B cell (primary cell): ENCODE measurements at regions of chr1 and their contacts with region 1.

Region 1: DNA sequence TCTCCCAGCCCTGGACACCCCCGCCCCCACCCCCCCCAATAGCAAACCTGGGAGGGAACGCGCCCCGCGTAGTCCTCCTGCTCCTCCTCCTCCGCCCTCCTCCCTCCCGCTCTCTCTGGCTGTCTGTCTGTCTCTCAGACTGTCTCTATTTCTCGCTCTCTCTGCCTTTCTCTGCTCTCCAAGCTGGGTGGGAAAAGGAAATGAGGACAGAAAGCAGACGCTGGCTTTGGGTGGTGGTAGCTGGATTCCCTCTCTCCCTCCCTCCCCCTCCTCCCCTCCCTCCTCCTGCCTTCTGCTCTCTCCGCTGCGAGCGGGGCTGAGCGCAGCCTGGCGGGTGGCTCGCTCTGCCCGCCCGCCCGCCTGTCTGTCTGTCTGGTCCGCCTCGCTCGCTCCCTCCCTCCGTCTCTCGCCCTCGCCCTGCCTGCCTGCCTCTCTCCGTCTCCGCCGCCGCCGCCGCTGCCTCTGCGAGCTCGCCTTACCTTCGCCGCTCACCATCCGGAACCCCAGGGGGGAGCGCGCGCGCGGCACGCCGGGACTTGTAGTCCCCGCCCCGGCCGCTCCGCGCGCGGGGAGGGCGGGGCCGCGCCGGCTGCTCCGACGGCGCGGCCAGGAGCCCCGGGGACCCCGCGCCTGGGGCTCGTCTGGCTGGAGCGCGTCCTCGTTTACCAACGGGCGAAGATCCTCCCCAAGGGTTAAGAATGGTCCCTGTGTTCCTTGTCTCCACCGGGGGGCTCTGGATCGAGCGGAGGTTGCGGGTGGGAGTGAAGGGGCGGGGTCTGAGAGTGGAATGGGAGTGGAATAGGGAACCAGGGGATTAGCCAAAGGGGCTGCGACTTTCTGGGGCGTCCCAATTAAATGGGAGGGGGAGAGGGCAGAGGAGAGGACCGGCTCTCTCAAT is at the start of gene AHDC1:
- DNase-seq: peak; percentile 93
- ATAC-seq: peak; percentile 78
- H3K4me3 ChIP-seq: peak within 1 kb of the TSS; percentile 63 to 90 (median 79)
- H3K4me3 Mint-ChIP-seq: peak within 1 kb of the TSS; percentile 94
- H3K27ac ChIP-seq: peak within 1 kb of the TSS; percentile 32 to 74
- H3K27ac Mint-ChIP-seq: peak within 1 kb of the TSS; percentile 90
- H3K4me1 ChIP-seq: peaks cover 43 to 66% of the 10 kb centered on the region in 2 donors
- H3K4me1 Mint-ChIP-seq: peaks cover 50% of the 10 kb centered on the region
- H3K27me3 ChIP-seq: no peaks in the 10 kb centered on the region
- H3K27me3 Mint-ChIP-seq: no peaks in the 10 kb centered on the region
- CTCF ChIP-seq: no peak
- total RNA-seq, gene AHDC1: 29.9 and 32.0 TPM in 2 replicates

Region 2: DNA sequence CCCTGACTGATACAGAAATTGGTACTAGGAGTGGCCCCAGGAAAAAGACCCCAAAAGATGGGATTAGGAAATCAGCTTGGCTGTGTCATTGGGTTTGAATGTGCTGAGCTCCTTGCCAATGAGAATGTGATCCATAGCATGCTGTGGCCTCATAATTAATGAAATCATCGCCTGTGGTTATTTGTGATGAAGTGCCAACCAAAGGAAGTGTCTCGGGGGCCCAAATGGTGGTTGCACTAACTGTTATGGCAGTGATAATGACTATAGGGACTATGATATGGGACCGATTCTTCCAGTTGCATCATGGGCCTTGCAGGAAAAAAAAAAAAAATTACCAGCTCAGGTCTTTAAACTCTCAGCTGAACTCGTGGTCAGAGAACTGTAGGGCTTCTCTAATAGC is 792.9 kb before region 1 on chr1:
- CTCF ChIA-PET with region 1: no interaction called
- POLR2A ChIA-PET with region 1: no interaction called
- intact Hi-C with region 1: no loop called
- DNase-seq: no peak
- ATAC-seq: no peak
- H3K4me3 ChIP-seq: no peak overlapping the region
- H3K4me3 Mint-ChIP-seq: no peak overlapping the region
- H3K27ac ChIP-seq: no peak overlapping the region
- H3K27ac Mint-ChIP-seq: no peak overlapping the region
- H3K4me1 ChIP-seq: no peaks in the 10 kb centered on the region
- H3K4me1 Mint-ChIP-seq: peaks cover 3% of the 10 kb centered on the region
- H3K27me3 ChIP-seq: peaks cover 0 to 6% (median 0%) of the 10 kb centered on the region in 4 experiments
- H3K27me3 Mint-ChIP-seq: no peaks in the 10 kb centered on the region
- CTCF ChIP-seq: no peak

Region 3: GRCh38 chr1:27300341-27301051 is 303.4 kb before region 1 on chr1:
- CTCF ChIA-PET with region 1: interaction called, 140 read pairs
- POLR2A ChIA-PET with region 1: interaction called, 7 read pairs
- intact Hi-C with region 1: loop called (anchors 1 kb)
- DNase-seq: peak; percentile 87
- ATAC-seq: peak; percentile 93
- H3K4me3 ChIP-seq: no peak overlapping the region
- H3K4me3 Mint-ChIP-seq: no peak overlapping the region
- H3K27ac ChIP-seq: no peak overlapping the region
- H3K27ac Mint-ChIP-seq: no peak overlapping the region
- H3K4me1 ChIP-seq: peaks cover 0 to 8% of the 10 kb centered on the region in 2 donors
- H3K4me1 Mint-ChIP-seq: peaks cover 3% of the 10 kb centered on the region
- H3K27me3 ChIP-seq: no peaks in the 10 kb centered on the region
- H3K27me3 Mint-ChIP-seq: no peaks in the 10 kb centered on the region
- CTCF ChIP-seq: peak; percentile 95

Region 4: GRCh38 chr1:27357281-27358037 is 246.5 kb before region 1 on chr1:
- CTCF ChIA-PET with region 1: interaction called, 22 read pairs
- POLR2A ChIA-PET with region 1: no interaction called
- intact Hi-C with region 1: no loop called
- DNase-seq: peak; percentile 90
- ATAC-seq: peak; percentile 71
- H3K4me3 ChIP-seq: peak overlapping the region; percentile 21 to 63 (median 54)
- H3K4me3 Mint-ChIP-seq: peak overlapping the region; percentile 84
- H3K27ac ChIP-seq: peak overlapping the region; percentile 19 to 34
- H3K27ac Mint-ChIP-seq: peak overlapping the region; percentile 75
- H3K4me1 ChIP-seq: peaks cover 36 to 54% of the 10 kb centered on the region in 2 donors
- H3K4me1 Mint-ChIP-seq: peaks cover 48% of the 10 kb centered on the region
- H3K27me3 ChIP-seq: no peaks in the 10 kb centered on the region
- H3K27me3 Mint-ChIP-seq: no peaks in the 10 kb centered on the region
- CTCF ChIP-seq: peak; percentile 98

Region 5: DNA sequence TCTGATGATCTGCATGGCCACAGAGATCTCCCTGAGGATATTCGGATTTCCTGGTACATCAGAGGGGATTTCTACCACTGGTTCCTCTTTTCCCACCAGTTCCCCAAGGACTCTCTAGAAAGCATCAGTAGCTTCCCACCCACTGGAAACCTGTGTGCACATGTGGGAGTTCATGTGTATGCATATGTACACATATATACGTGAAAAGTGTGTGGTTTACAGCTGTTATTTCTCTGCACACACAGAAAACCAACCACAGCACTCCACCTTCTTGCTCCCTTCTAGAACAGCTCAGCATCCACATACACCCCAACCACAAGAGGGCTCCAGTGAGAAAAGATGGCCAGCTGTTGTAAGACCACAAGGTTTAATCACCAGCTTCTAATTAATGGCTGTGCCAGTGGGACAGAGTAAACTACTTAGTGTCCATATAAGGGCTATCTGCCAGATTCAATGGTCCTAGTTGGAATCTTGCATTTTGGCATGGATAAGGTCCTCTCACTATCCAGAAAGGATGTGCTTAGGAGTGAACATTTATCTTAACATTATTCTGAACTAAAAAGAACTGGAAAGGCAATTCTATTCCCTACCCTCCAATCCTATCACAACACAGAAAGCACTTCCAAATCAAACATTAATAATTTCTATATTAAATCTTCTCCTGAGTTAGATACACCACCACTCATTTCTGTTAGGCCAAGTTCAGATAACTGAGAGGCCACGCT is 187.4 kb before region 1 on chr1:
- CTCF ChIA-PET with region 1: interaction called, 95 read pairs
- POLR2A ChIA-PET with region 1: interaction called, 5 read pairs
- intact Hi-C with region 1: loop called (anchors 1 kb)
- DNase-seq: peak; percentile 79
- ATAC-seq: peak; percentile 66
- H3K4me3 ChIP-seq: no peak overlapping the region
- H3K4me3 Mint-ChIP-seq: no peak overlapping the region
- H3K27ac ChIP-seq: peak overlapping the region; percentile 37 to 69
- H3K27ac Mint-ChIP-seq: peak overlapping the region; percentile 69
- H3K4me1 ChIP-seq: peaks cover 38 to 39% of the 10 kb centered on the region in 2 donors
- H3K4me1 Mint-ChIP-seq: peaks cover 41% of the 10 kb centered on the region
- H3K27me3 ChIP-seq: no peaks in the 10 kb centered on the region
- H3K27me3 Mint-ChIP-seq: no peaks in the 10 kb centered on the region
- CTCF ChIP-seq: peak; percentile 78

Region 6: DNA sequence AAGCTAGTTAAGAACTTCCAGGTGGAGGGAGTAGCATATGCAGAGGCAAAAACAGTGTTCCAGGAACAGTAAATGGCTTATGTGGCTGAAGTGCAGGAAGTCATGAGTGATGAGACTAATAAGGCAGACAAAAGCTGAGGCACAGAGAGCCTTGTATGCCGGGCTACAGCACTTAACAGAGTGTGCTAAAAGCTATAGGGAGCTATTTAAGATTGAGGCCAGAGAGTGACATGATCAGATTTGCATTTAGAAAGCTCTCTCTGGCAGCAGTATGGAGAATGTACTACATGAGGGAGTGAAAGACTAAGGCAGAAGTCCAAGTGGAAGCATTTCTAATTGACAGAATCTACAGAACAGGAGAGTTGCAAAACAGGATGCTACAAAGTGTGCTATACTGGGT is 152.6 kb before region 1 on chr1:
- CTCF ChIA-PET with region 1: no interaction called
- POLR2A ChIA-PET with region 1: no interaction called
- intact Hi-C with region 1: no loop called
- DNase-seq: no peak
- ATAC-seq: no peak
- H3K4me3 ChIP-seq: no peak overlapping the region
- H3K4me3 Mint-ChIP-seq: no peak overlapping the region
- H3K27ac ChIP-seq: peak overlapping the region in 1 of 2 donors; percentile 18
- H3K27ac Mint-ChIP-seq: peak overlapping the region; percentile 15
- H3K4me1 ChIP-seq: peaks cover 22 to 26% of the 10 kb centered on the region in 2 donors
- H3K4me1 Mint-ChIP-seq: peaks cover 57% of the 10 kb centered on the region
- H3K27me3 ChIP-seq: no peaks in the 10 kb centered on the region
- H3K27me3 Mint-ChIP-seq: no peaks in the 10 kb centered on the region
- CTCF ChIP-seq: no peak

Region 7: GRCh38 chr1:27568300-27569087 is 35.4 kb before region 1 on chr1:
- CTCF ChIA-PET with region 1: interaction called, 60 read pairs
- POLR2A ChIA-PET with region 1: interaction called, 5 read pairs
- intact Hi-C with region 1: loop called (anchors 1 kb)
- DNase-seq: peak; percentile 95
- ATAC-seq: peak; percentile 92
- H3K4me3 ChIP-seq: peak overlapping the region in 4 of 5 experiments; percentile 25 to 69 (median 50)
- H3K4me3 Mint-ChIP-seq: peak overlapping the region; percentile 86
- H3K27ac ChIP-seq: peak overlapping the region; percentile 27 to 68
- H3K27ac Mint-ChIP-seq: peak overlapping the region; percentile 69
- H3K4me1 ChIP-seq: peaks cover 15 to 38% of the 10 kb centered on the region in 2 donors
- H3K4me1 Mint-ChIP-seq: peaks cover 40% of the 10 kb centered on the region
- H3K27me3 ChIP-seq: no peaks in the 10 kb centered on the region
- H3K27me3 Mint-ChIP-seq: no peaks in the 10 kb centered on the region
- CTCF ChIP-seq: peak; percentile 82

Region 8: GRCh38 chr1:27624467-27625178 is 20.7 kb after region 1 on chr1:
- CTCF ChIA-PET with region 1: interaction called, 22 read pairs
- POLR2A ChIA-PET with region 1: interaction called, 9 read pairs
- intact Hi-C with region 1: loop called (anchors 1 kb)
- DNase-seq: no peak
- ATAC-seq: no peak
- H3K4me3 ChIP-seq: peak overlapping the region; percentile 56 to 66 (median 63)
- H3K4me3 Mint-ChIP-seq: no peak overlapping the region
- H3K27ac ChIP-seq: peak overlapping the region; percentile 87 to 88
- H3K27ac Mint-ChIP-seq: no peak overlapping the region
- H3K4me1 ChIP-seq: peaks cover 74 to 91% of the 10 kb centered on the region in 2 donors
- H3K4me1 Mint-ChIP-seq: peaks cover 41% of the 10 kb centered on the region
- H3K27me3 ChIP-seq: no peaks in the 10 kb centered on the region
- H3K27me3 Mint-ChIP-seq: no peaks in the 10 kb centered on the region
- CTCF ChIP-seq: no peak

Region 9: DNA sequence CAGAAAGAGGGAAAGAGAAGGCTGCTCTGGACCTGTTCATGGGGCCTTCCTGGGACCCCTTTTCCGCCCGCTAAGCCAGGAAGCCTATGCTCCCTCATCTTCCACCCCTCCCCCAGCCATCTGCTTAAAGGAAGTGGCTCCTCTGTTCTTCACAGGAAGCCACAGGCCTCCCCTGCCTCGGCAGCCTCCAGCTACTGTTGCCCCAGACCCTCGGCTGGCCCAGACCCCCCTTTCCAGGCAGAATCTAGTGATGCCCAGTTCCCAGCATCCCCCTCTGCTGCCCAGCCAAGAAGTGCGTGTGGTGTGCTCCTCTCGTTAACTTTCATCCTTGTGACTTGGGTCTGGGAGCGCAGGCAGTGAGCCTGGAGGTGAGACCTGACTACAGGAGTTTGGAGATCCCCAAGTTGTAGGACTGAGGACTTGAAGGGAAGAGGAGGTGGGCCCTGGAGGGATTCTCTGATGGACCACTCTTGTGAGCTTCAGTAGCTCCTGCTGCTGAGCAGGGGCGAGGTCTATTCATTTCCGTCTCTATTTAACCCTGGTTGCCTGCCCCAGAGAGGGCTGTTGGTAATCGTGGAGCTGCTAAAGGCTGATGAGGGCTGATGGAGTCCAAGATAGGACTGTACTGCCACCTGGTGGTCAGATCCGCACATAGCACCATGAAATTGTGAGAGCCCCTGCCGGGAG is 58.9 kb after region 1 on chr1:
- CTCF ChIA-PET with region 1: interaction called, 473 read pairs
- POLR2A ChIA-PET with region 1: interaction called, 31 read pairs
- intact Hi-C with region 1: loop called (anchors 1 kb)
- DNase-seq: peak; percentile 93
- ATAC-seq: peak; percentile 40
- H3K4me3 ChIP-seq: peak overlapping the region in 4 of 5 experiments; percentile 20 to 33 (median 24)
- H3K4me3 Mint-ChIP-seq: peak overlapping the region; percentile 81
- H3K27ac ChIP-seq: peak overlapping the region; percentile 85 to 96
- H3K27ac Mint-ChIP-seq: peak overlapping the region; percentile 99
- H3K4me1 ChIP-seq: peaks cover 42 to 52% of the 10 kb centered on the region in 2 donors
- H3K4me1 Mint-ChIP-seq: peaks cover 50% of the 10 kb centered on the region
- H3K27me3 ChIP-seq: no peaks in the 10 kb centered on the region
- H3K27me3 Mint-ChIP-seq: no peaks in the 10 kb centered on the region
- CTCF ChIP-seq: peak; percentile 89